Naive thymus-derived CD4-positive, alpha-beta T cell (primary cell): ENCODE measurements at regions of chr5 and their contacts with region 1.

Region 1: DNA sequence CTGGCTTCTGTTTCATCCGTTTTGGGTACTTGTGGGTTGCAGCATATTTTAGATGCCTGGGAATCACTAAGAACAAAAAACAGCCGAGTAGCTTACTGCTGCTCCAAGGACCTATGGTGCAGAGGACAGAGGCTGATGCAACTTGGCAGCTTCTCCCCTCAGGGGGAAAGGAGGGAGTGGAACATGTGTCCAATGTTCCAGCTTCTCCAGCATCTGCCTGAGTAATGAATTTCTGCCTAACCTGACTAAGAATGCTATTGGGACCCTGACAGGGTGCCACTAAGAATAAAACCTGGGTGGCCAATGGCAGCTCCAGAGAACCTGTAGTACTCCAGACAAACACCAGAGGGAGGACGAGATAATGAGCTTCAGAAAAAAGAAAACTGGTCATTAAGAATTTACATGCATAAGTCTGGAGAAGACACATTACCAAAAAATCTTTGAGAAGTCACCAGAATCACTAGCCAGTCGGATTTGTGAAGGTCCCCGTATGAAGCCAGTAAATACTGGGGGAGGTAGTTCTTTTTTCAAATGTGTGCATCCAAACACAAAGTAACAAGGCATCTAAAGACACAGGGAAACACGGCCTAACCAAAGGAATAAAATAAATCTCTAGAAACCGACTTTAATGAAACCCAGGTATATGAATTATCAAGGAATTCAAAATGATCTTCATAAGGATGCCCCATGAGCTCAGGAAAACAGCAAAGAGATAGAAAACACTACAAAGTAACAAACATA is 293.5 kb downstream of the HINT1 start:
- DNase-seq: peak in 8 of 9 donors; percentile 6 to 61 (median 42)
- ATAC-seq: peak; percentile 75
- H3K4me3 ChIP-seq: no peak overlapping the region
- H3K4me3 Mint-ChIP-seq: no peak overlapping the region
- H3K27ac ChIP-seq: no peak overlapping the region
- H3K27ac Mint-ChIP-seq: no peak overlapping the region
- H3K4me1 ChIP-seq: no peaks in the 10 kb centered on the region
- H3K4me1 Mint-ChIP-seq: no peaks in the 10 kb centered on the region
- H3K27me3 ChIP-seq: no peaks in the 10 kb centered on the region
- H3K27me3 Mint-ChIP-seq: no peaks in the 10 kb centered on the region

Region 2: GRCh38 chr5:131068893-131069643 is 197.6 kb after region 1 on chr5:
- CTCF ChIA-PET with region 1: interaction called, 6 read pairs
- POLR2A ChIA-PET with region 1: interaction called, 3 read pairs
- intact Hi-C with region 1: loop called (anchors 1 kb)
- DNase-seq: peak; percentile 8 to 81 (median 67)
- ATAC-seq: peak; percentile 99
- H3K4me3 ChIP-seq: peak overlapping the region; percentile 20
- H3K4me3 Mint-ChIP-seq: peak overlapping the region; percentile 1 to 83 (median 73)
- H3K27ac ChIP-seq: peak overlapping the region; percentile 46
- H3K27ac Mint-ChIP-seq: peak overlapping the region; percentile 83 to 99 (median 92)
- H3K4me1 ChIP-seq: peaks cover 18 to 29% of the 10 kb centered on the region in 2 donors
- H3K4me1 Mint-ChIP-seq: peaks cover 28 to 68% (median 58%) of the 10 kb centered on the region in 7 donors
- H3K27me3 ChIP-seq: no peaks in the 10 kb centered on the region
- H3K27me3 Mint-ChIP-seq: no peaks in the 10 kb centered on the region

Region 3: DNA sequence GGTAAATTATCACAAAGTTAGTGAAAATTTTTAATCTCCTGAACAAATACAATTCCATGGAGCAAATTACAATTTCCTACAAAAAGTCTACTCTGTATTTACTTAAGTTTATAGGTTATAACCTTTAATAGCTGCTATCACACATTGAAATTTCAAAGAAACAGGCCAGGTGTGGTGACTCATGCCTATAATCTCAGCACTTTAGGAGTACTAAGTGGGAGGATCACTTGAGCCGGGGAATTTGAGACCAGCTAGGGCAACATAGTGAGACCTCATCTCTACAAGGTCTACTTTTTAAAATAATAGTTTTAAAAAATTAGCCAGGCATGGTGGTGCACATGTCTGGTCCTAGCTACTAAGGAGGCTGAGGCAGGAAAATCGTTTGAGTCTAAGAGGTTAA is 243.2 kb after region 1 on chr5:
- CTCF ChIA-PET with region 1: interaction called, 30 read pairs
- POLR2A ChIA-PET with region 1: no interaction called
- intact Hi-C with region 1: loop called (anchors 1 kb)
- DNase-seq: no peak
- ATAC-seq: no peak
- H3K4me3 ChIP-seq: no peak overlapping the region
- H3K4me3 Mint-ChIP-seq: no peak overlapping the region
- H3K27ac ChIP-seq: no peak overlapping the region
- H3K27ac Mint-ChIP-seq: no peak overlapping the region
- H3K4me1 ChIP-seq: no peaks in the 10 kb centered on the region
- H3K4me1 Mint-ChIP-seq: peaks cover 0 to 3% (median 2%) of the 10 kb centered on the region in 7 donors
- H3K27me3 ChIP-seq: no peaks in the 10 kb centered on the region
- H3K27me3 Mint-ChIP-seq: peaks cover 0 to 3% (median 0%) of the 10 kb centered on the region in 5 donors

Region 4: GRCh38 chr5:131417240-131417869 is 545.8 kb after region 1 on chr5:
- CTCF ChIA-PET with region 1: interaction called, 8 read pairs
- POLR2A ChIA-PET with region 1: no interaction called
- intact Hi-C with region 1: loop called (anchors 1 kb)
- DNase-seq: peak; percentile 61 to 78 (median 74)
- ATAC-seq: peak; percentile 81
- H3K4me3 ChIP-seq: no peak overlapping the region
- H3K4me3 Mint-ChIP-seq: peak overlapping the region in 7 of 10 donors; percentile 27 to 70 (median 45)
- H3K27ac ChIP-seq: peak overlapping the region; percentile 23
- H3K27ac Mint-ChIP-seq: peak overlapping the region; percentile 68 to 95 (median 81)
- H3K4me1 ChIP-seq: peaks cover 8 to 14% of the 10 kb centered on the region in 2 donors
- H3K4me1 Mint-ChIP-seq: peaks cover 17 to 52% (median 46%) of the 10 kb centered on the region in 7 donors
- H3K27me3 ChIP-seq: no peaks in the 10 kb centered on the region
- H3K27me3 Mint-ChIP-seq: no peaks in the 10 kb centered on the region